CD4-positive, alpha-beta memory T cell (primary cell): ENCODE measurements at regions of chr1 and their contacts with region 1.

Region 1: DNA sequence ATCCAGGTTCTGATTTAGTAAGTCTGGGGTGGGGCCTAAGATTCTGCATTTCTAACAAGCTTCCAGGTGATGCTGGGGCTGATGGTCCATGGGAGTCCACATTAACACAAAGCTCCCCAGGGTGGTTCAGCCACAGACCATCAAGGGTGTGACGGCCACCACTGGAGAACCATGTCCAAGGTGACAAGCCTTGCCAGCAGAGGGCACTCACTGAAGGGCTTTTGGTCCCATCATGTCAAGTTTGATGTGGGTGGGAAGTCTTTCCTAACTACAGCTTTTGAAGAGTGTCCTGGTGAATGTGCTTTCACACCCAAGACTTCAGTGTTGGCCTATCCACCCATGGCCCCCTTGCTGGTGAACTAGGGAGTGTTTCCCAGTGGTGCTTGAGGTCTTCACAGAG is 67.1 kb downstream of the UBE2T start:
- DNase-seq: peak in 4 of 5 donors; percentile 14 to 24 (median 18)
- H3K4me3 ChIP-seq: no peak overlapping the region
- H3K4me3 Mint-ChIP-seq: no peak overlapping the region
- H3K27ac ChIP-seq: no peak overlapping the region
- H3K27ac Mint-ChIP-seq: no peak overlapping the region
- H3K4me1 ChIP-seq: no peaks in the 10 kb centered on the region
- H3K4me1 Mint-ChIP-seq: no peaks in the 10 kb centered on the region
- H3K27me3 ChIP-seq: no peaks in the 10 kb centered on the region
- H3K27me3 Mint-ChIP-seq: peaks cover 9 to 10% of the 10 kb centered on the region in 2 donors

Region 2: GRCh38 chr1:202235856-202236837 is 38.5 kb before region 1 on chr1:
- CTCF ChIA-PET with region 1: no interaction called
- POLR2A ChIA-PET with region 1: no interaction called
- intact Hi-C with region 1: no loop called
- DNase-seq: peak; percentile 40 to 56 (median 51)
- H3K4me3 ChIP-seq: no peak overlapping the region
- H3K4me3 Mint-ChIP-seq: no peak overlapping the region
- H3K27ac ChIP-seq: no peak overlapping the region
- H3K27ac Mint-ChIP-seq: no peak overlapping the region
- H3K4me1 ChIP-seq: no peaks in the 10 kb centered on the region
- H3K4me1 Mint-ChIP-seq: peaks cover 0 to 4% (median 3%) of the 10 kb centered on the region in 4 donors
- H3K27me3 ChIP-seq: no peaks in the 10 kb centered on the region
- H3K27me3 Mint-ChIP-seq: peaks cover 8 to 12% of the 10 kb centered on the region in 2 donors

Region 3: DNA sequence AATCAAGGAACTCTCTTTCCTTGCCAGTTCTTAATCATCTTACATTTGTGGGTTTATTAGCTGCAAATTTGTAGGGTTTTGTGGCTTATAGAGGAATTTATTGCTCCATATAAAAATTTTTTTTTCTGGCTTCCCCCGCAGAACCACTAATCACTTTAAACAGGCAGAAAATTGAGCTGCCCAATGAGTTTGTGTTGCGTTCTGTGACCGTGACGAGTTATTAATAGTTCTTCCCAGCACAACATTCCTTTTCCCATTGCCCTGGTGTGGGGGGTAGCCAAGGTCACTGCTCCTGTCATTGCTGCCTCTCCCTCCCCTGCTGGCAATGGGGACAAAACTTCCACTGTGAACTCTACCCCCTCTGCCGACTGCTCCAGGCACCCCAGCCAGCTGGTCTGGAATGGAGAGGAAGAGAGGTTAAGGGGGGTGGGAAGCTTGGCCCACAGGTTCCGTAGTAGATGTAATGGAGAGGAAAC is 12.0 kb after region 1 on chr1:
- CTCF ChIA-PET with region 1: interaction called, 10 read pairs
- POLR2A ChIA-PET with region 1: no interaction called
- intact Hi-C with region 1: no loop called
- DNase-seq: no peak
- H3K4me3 ChIP-seq: no peak overlapping the region
- H3K4me3 Mint-ChIP-seq: no peak overlapping the region
- H3K27ac ChIP-seq: no peak overlapping the region
- H3K27ac Mint-ChIP-seq: peak overlapping the region in 1 of 7 donors; percentile 15
- H3K4me1 ChIP-seq: peaks cover 12% of the 10 kb centered on the region
- H3K4me1 Mint-ChIP-seq: peaks cover 8 to 26% (median 15%) of the 10 kb centered on the region in 4 donors
- H3K27me3 ChIP-seq: no peaks in the 10 kb centered on the region
- H3K27me3 Mint-ChIP-seq: no peaks in the 10 kb centered on the region

Region 4: GRCh38 chr1:202315576-202316168 is 41.1 kb after region 1 on chr1:
- CTCF ChIA-PET with region 1: interaction called, 78 read pairs
- POLR2A ChIA-PET with region 1: no interaction called
- intact Hi-C with region 1: loop called (anchors 1 kb)
- DNase-seq: peak; percentile 59 to 72 (median 68)
- H3K4me3 ChIP-seq: no peak overlapping the region
- H3K4me3 Mint-ChIP-seq: no peak overlapping the region
- H3K27ac ChIP-seq: no peak overlapping the region
- H3K27ac Mint-ChIP-seq: peak overlapping the region in 2 of 7 donors; percentile 25 to 26
- H3K4me1 ChIP-seq: no peaks in the 10 kb centered on the region
- H3K4me1 Mint-ChIP-seq: peaks cover 0 to 4% (median 0%) of the 10 kb centered on the region in 4 donors
- H3K27me3 ChIP-seq: no peaks in the 10 kb centered on the region
- H3K27me3 Mint-ChIP-seq: peaks cover 0 to 4% of the 10 kb centered on the region in 2 donors